ENCODE measurements at regions of chr16 and their contacts with region 1.

Region 1: GRCh38 chr16:5033256-5034169 is at the start of gene NAGPA:
- DNase-seq: peak; percentile 90 to 98 (median 94)

Region 2: GRCh38 chr16:5071681-5072333 is 38.3 kb after region 1 on chr16 and contains the start of gene ALG1:
- intact Hi-C with region 1: loop called (anchors 5 kb)
- DNase-seq: peak; percentile 78 to 96 (median 91)